ENCODE measurements at regions of chr12 and their contacts with region 1.

Region 1: GRCh38 chr12:55194382-55194781 is 26.4 kb upstream of the OR10A7 start:
- DNase-seq: no peak
- CTCF ChIP-seq: no peak

Region 2: GRCh38 chr12:54870604-54871003 is 323.8 kb before region 1 on chr12:
- in situ Hi-C with region 1: no loop called
- DNase-seq: no peak
- CTCF ChIP-seq: no peak

Region 3: GRCh38 chr12:55336002-55336401 is 141.6 kb after region 1 on chr12:
- in situ Hi-C with region 1: no loop called
- DNase-seq: no peak
- CTCF ChIP-seq: no peak

Region 4: GRCh38 chr12:55619354-55620138 is 425.2 kb after region 1 on chr12:
- in situ Hi-C with region 1: loop called (anchors 10 kb)
- DNase-seq: peak; percentile 72
- CTCF ChIP-seq: peak; percentile 62